Activated CD4-positive, alpha-beta memory T cell treated with anti-CD3 and anti-CD28 coated beads for 36 hours (primary cell): ENCODE measurements at regions of chr7 and their contacts with region 1.

Region 1: GRCh38 chr7:50696810-50697582 is 85.7 kb downstream of the GRB10 start:
- DNase-seq: no peak
- H3K4me3 Mint-ChIP-seq: no peak overlapping the region
- H3K27ac Mint-ChIP-seq: no peak overlapping the region
- H3K4me1 Mint-ChIP-seq: peaks cover 11% of the 10 kb centered on the region
- H3K27me3 Mint-ChIP-seq: no peaks in the 10 kb centered on the region

Region 2: DNA sequence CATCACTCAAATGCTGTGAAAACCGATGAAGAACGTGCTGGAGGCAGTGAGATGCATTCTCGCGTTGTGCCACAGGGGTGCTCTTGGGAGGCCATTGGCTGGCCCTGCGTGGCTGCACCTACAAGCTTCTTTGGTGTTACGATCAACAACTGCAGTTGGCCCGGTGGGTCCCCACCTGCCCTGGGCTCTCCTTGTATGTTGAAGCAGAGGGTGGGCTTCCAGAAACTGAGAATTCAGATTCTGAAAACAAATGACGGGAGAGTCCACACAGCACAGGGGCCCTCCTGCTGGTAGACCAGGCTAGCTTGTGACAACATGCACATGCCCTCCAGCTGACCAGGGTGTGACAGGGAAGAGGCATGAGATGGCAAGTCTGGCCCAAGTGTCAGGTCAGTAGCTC is 108.1 kb before region 1 on chr7:
- CTCF ChIA-PET with region 1: no interaction called
- POLR2A ChIA-PET with region 1: no interaction called
- intact Hi-C with region 1: no loop called
- DNase-seq: no peak
- H3K4me3 Mint-ChIP-seq: no peak overlapping the region
- H3K27ac Mint-ChIP-seq: no peak overlapping the region
- H3K4me1 Mint-ChIP-seq: no peaks in the 10 kb centered on the region
- H3K27me3 Mint-ChIP-seq: peaks cover 8% of the 10 kb centered on the region

Region 3: GRCh38 chr7:50739744-50740435 is 42.9 kb after region 1 on chr7:
- CTCF ChIA-PET with region 1: no interaction called
- POLR2A ChIA-PET with region 1: no interaction called
- intact Hi-C with region 1: loop called (anchors 2 kb)
- DNase-seq: peak; percentile 80
- H3K4me3 Mint-ChIP-seq: peak overlapping the region; percentile 62
- H3K27ac Mint-ChIP-seq: peak overlapping the region; percentile 68
- H3K4me1 Mint-ChIP-seq: peaks cover 27% of the 10 kb centered on the region
- H3K27me3 Mint-ChIP-seq: no peaks in the 10 kb centered on the region